ENCODE measurements at regions of chr3 and their contacts with region 1.

Region 1: DNA sequence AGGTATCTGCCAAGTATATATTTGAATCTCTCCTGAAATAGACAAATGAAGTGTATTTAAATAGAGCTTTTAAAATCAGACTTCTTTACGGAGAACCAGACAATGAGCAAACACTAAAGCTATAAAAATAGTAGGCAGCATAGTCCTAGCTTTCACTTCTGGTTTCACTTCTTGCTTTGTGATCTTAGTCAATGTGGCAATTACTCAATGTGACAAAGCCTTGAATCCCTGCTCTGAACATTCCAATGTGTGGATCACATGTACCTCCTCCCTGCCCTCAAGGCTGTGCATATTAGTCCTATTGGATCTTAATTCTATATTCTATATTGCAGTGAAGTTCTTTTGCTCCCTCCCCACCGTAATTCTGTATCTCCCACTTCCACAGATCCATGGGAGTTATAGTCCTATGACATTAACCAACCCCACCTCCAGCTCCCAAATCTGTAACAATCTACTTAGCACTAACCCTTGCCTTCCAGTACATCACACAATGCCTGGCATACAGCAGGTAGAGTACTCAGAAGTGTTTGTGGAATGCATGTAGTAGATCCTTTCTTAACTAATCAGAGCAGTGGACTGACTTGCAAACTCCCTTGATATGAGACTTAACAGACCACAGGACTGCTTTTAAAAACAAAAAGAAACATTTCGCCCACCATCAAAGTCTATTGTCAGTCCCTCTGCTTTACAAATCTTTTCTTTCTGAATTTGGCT is 24.3 kb upstream of the CP start:
- DNase-seq: no peak
- ATAC-seq: peak in 3 of 4 donors; percentile 55 to 69 (median 67)
- H3K4me3 ChIP-seq: peak overlapping the region in 5 of 12 donors; percentile 19 to 29 (median 24)
- H3K27ac ChIP-seq: peak overlapping the region in 7 of 12 donors; percentile 12 to 80 (median 34)
- H3K4me1 ChIP-seq: peaks cover 0 to 53% (median 6%) of the 10 kb centered on the region in 12 donors
- H3K27me3 ChIP-seq: no peaks in the 10 kb centered on the region
- CTCF ChIP-seq: no peak
- POLR2A ChIP-seq: no peak

Region 2: DNA sequence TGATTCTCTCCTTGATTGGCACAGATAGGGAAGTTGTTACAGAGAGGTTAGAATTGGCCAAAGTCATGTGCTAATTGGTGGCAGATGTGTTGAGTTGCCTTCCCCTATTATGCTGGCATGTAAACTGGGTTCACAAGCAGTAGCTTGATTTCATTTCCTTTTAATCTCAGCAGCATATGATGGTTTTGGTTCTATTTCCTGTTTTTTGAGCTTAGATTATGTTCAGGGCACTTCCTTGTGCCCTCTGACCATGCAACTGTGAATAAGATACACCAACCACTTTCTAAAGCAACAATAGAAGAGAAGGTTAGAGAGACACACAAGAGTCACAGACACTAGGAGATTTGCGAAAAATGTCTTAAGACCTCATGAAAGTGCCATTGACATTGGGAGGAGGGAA is 99.9 kb before region 1 on chr3:
- intact Hi-C with region 1: loop called in 1 of 10 experiments (anchors 10 kb)
- DNase-seq: no peak
- ATAC-seq: peak; percentile 47 to 77 (median 62)
- H3K4me3 ChIP-seq: no peak overlapping the region
- H3K27ac ChIP-seq: peak overlapping the region in 1 of 12 donors; percentile 88
- H3K4me1 ChIP-seq: peaks cover 0 to 34% (median 0%) of the 10 kb centered on the region in 12 donors
- H3K27me3 ChIP-seq: no peaks in the 10 kb centered on the region
- CTCF ChIP-seq: no peak
- POLR2A ChIP-seq: no peak

Region 3: DNA sequence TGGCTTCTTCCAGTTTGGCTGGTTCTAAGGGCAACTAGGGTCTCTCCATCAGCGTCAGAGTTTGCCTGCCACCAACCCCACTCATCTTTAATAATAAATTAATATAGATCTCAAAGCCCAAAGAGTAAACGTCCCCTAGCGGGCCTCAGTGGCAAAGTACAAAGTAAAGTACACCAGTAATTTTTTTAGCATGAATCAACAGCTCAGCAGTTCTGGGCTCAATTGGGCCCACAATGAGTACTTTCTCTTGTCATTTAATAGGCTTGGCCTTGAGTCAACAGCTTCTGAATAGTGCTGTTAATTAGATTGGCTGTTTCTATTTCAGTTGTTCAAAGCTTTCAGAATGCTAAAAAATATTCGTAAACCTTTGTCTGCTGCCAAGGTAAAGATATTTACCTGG is 813.8 kb after region 1 on chr3:
- intact Hi-C with region 1: no loop called
- DNase-seq: no peak
- ATAC-seq: no peak
- H3K4me3 ChIP-seq: no peak overlapping the region
- H3K27ac ChIP-seq: no peak overlapping the region
- H3K4me1 ChIP-seq: peaks cover 0 to 21% (median 4%) of the 10 kb centered on the region in 12 donors
- H3K27me3 ChIP-seq: no peaks in the 10 kb centered on the region
- CTCF ChIP-seq: no peak
- POLR2A ChIP-seq: no peak